Dendritic cell treated with granulocyte-macrophage colony-stimulating factor and Interleukin-4, amounts not matched to agents 40 ng/mL and 50 ng/mL, for 4 days (primary cell): ENCODE measurements at regions of chr1 and their contacts with region 1.

Region 1: GRCh38 chr1:56831871-56832693 is 12.9 kb upstream of the FYB2 start:
- H3K4me3 Mint-ChIP-seq: no peak overlapping the region
- H3K27ac Mint-ChIP-seq: no peak overlapping the region
- H3K4me1 Mint-ChIP-seq: no peaks in the 10 kb centered on the region
- H3K27me3 Mint-ChIP-seq: peaks cover 12% of the 10 kb centered on the region

Region 2: DNA sequence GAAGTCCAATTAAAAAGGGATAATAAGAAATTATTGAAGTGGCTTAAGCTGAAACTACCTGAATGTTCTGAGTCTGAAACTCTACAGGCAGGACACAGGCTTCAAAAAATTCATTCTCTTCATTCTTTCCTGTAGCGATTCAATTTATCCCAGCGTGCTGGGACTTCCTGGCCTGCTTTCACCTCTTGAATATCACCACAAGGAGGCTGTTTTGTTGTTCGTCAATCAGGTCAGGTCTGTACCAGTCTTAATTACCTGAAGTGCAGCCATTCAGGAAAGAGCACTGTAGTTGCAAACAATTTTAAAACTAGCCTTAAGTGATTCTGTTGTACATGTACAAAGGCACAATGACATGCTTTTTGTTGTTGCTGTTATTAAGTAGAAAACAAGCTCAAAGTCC is 51.3 kb before region 1 on chr1:
- intact Hi-C with region 1: no loop called
- H3K4me3 Mint-ChIP-seq: no peak overlapping the region
- H3K27ac Mint-ChIP-seq: no peak overlapping the region
- H3K4me1 Mint-ChIP-seq: peaks cover 3% of the 10 kb centered on the region
- H3K27me3 Mint-ChIP-seq: peaks cover 7% of the 10 kb centered on the region

Region 3: DNA sequence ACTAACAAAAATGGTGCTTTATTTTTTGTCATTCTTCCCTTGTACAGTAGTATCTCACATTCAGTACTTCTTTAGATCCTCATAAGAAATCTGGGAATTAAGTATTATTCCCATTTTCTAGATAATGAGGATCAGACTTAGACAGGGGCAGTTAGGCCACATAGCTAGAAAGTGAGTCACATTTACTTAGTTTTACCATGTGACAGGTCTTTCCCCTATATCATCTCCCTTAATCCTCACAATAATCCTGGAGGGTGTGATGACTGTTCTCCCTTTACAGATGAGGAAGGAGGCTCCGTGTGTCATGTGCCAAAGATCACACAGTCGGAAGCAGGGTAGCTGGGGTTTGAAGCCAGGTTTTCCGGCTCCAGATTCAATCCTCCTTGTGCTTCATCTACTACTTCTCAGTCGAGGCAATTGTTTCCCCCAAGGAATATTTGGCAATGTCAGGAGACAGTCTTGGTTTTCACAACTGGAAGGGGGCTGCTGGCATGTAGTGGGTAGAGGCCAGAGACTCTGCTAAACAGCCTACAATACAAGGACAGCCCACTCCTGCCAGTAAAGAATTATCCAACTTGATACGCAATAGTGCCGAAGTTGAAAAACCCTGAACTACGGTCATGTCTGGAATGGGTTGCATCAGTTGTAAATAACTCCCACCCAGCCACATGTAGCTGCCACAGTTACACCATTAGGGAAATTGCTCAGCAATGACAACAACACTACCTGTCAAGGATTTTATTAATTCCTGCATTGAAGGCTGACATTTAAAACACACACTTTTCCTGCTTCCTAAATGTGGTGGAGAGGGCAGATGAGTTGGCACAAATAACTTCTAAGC is 79.2 kb after region 1 on chr1:
- intact Hi-C with region 1: no loop called
- H3K4me3 Mint-ChIP-seq: no peak overlapping the region
- H3K27ac Mint-ChIP-seq: peak overlapping the region; percentile 92
- H3K4me1 Mint-ChIP-seq: peaks cover 42% of the 10 kb centered on the region
- H3K27me3 Mint-ChIP-seq: no peaks in the 10 kb centered on the region

Region 4: GRCh38 chr1:56967900-56968832 is 136.1 kb after region 1 on chr1:
- intact Hi-C with region 1: loop called (anchors 1 kb)
- H3K4me3 Mint-ChIP-seq: no peak overlapping the region
- H3K27ac Mint-ChIP-seq: no peak overlapping the region
- H3K4me1 Mint-ChIP-seq: no peaks in the 10 kb centered on the region
- H3K27me3 Mint-ChIP-seq: no peaks in the 10 kb centered on the region

Region 5: DNA sequence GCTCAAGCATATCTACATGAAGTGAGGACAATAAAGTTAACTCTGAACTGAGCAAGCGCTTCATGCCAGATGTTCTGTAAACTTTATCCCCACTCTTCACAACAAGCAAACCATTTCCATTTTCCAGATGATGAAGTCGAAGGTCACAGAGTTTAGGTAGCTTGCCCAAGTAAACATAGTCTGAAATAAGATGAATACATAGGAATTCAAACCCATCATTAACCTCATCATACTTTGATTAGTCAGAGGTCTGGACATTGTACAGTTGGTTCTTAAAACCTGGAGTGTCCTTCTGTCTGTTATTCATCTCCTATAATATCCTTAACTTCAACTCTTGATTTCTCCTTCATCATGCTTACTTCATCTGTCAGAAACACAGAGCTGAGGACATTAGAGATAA is 314.0 kb after region 1 on chr1:
- intact Hi-C with region 1: no loop called
- H3K4me3 Mint-ChIP-seq: no peak overlapping the region
- H3K27ac Mint-ChIP-seq: no peak overlapping the region
- H3K4me1 Mint-ChIP-seq: no peaks in the 10 kb centered on the region
- H3K27me3 Mint-ChIP-seq: no peaks in the 10 kb centered on the region

Region 6: GRCh38 chr1:58047265-58047858 is 1215.3 kb after region 1 on chr1:
- intact Hi-C with region 1: loop called (anchors 5 kb)
- H3K4me3 Mint-ChIP-seq: no peak overlapping the region
- H3K27ac Mint-ChIP-seq: no peak overlapping the region
- H3K4me1 Mint-ChIP-seq: no peaks in the 10 kb centered on the region
- H3K27me3 Mint-ChIP-seq: no peaks in the 10 kb centered on the region

Region 7: GRCh38 chr1:58162952-58163550 is 1331.0 kb after region 1 on chr1:
- intact Hi-C with region 1: loop called (anchors 5 kb)
- H3K4me3 Mint-ChIP-seq: no peak overlapping the region
- H3K27ac Mint-ChIP-seq: no peak overlapping the region
- H3K4me1 Mint-ChIP-seq: peaks cover 6% of the 10 kb centered on the region
- H3K27me3 Mint-ChIP-seq: peaks cover 2% of the 10 kb centered on the region